ENCODE measurements at regions of chr5 and their contacts with region 1.

Region 1: GRCh38 chr5:142356716-142357473 is 32.1 kb upstream of the SPRY4 start:
- DNase-seq: peak; percentile 95
- H3K4me3 Mint-ChIP-seq: peak overlapping the region; percentile 82
- H3K27ac Mint-ChIP-seq: peak overlapping the region; percentile 86
- H3K4me1 Mint-ChIP-seq: peaks cover 6% of the 10 kb centered on the region
- H3K27me3 Mint-ChIP-seq: no peaks in the 10 kb centered on the region
- CTCF ChIP-seq: no peak

Region 2: DNA sequence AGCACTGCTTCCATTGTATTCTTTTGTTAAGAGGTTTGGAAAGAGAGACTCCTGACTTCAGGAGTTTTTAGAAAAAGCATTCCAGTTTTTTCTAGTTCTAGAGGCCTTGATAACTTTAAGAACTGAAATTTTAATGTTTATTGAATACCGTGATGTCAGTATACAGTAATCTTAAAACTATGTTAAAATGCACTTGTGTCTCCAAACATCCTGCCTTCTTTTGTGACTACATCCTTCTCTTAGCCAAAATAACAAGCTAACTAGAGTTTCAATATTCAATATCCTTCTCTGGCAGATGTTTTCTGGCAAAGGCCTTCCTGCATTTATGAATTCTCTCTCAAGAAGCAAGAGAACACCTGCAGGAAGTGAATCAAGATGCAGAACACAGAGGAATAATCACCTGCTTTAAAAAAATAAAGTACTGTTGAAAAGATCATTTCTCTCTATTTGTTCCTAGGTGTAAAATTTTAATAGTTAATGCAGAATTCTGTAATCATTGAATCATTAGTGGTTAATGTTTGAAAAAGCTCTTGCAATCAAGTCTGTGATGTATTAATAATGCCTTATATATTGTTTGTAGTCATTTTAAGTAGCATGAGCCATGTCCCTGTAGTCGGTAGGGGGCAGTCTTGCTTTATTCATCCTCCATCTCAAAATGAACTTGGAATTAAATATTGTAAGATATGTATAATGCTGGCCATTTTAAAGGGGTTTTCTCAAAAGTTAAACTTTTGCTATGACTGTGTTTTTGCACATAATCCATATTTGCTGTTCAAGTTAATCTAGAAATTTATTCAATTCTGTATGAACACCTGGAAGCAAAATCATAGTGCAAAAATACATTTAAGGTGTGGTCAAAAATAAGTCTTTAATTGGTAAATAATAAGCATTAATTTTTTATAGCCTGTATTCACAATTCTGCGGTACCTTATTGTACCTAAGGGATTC is 205.2 kb before region 1 on chr5:
- CTCF ChIA-PET with region 1: interaction called, 4 read pairs
- POLR2A ChIA-PET with region 1: interaction called, 4 read pairs
- intact Hi-C with region 1: loop called (anchors 1 kb)
- DNase-seq: peak; percentile 85
- H3K4me3 Mint-ChIP-seq: no peak overlapping the region
- H3K27ac Mint-ChIP-seq: no peak overlapping the region
- H3K4me1 Mint-ChIP-seq: no peaks in the 10 kb centered on the region
- H3K27me3 Mint-ChIP-seq: no peaks in the 10 kb centered on the region
- CTCF ChIP-seq: peak; percentile 89

Region 3: DNA sequence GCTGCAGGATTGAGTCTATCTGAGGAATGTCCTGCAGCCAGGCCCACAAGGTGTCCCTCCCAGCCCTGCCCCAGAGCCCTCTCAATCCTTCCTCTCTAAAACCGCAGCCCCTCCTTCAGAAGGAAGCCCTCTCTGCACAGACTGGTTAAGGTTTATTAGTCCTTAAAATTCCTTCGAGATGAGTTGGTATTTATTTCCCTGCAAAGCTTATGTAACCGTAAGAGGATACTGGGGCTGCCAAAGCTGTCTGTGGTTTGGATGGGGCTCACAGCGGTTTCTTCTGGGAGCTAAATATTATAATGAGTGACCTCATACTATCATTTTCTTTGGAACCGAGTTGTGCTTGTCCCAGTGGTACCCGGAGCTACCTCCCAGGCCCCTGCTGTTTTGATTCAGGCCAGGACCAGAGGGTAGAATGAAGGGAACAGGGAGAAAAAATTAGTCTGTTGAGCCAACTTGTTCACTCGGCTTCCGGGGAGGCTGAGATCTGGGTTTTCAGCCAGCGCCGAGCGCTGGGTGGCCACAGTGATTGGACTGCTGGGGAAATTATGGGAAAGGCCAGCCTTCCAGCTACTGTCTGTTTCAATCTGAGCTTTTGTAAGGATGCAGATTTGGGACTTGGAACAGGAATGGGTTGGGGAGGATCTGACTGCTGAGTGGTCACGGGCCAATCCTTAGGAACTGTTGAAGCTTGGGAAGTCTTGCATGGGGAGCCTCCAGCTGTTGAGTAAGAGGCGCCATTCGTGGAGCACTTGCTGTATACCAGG is 140.8 kb before region 1 on chr5:
- CTCF ChIA-PET with region 1: no interaction called
- POLR2A ChIA-PET with region 1: interaction called, 3 read pairs
- intact Hi-C with region 1: loop called (anchors 2 kb)
- DNase-seq: peak; percentile 99
- H3K4me3 Mint-ChIP-seq: peak overlapping the region; percentile 72
- H3K27ac Mint-ChIP-seq: peak overlapping the region; percentile 35
- H3K4me1 Mint-ChIP-seq: peaks cover 12% of the 10 kb centered on the region
- H3K27me3 Mint-ChIP-seq: peaks cover 2% of the 10 kb centered on the region
- CTCF ChIP-seq: no peak

Region 4: DNA sequence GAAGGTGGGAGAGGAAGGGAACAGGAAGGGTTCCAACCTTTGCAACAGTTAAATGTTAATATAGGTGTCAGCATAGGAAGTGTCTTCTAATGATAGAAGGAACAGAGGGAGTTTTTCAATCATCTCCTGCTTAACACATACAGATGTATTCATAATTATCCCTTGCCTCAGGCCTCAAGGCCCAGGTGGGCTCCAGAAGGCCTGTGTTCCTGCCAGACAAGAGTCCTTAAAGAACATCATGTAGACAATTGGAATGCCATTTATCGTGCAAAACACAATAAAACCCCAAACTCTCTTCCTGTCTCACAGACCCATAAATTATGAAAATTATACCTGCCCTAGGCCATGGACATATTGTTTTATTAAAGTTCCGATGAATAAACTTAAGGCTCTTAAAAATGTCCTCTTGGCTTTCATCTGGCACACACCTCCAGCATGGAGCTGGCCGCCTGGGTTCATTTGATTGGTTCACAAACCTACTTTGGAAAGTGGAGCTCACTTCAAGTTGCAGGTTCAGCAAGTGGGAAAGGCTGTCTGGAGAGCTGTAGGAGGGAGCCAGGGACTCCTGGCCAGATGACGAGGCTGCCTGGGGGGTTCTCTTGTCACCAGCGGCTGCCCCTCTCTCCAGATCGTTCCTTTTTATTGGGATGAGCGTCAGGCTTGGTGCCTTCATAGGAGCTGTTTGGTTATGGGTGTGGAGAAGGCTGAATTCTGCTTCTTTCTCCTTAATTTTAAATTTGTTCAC is 49.6 kb before region 1 on chr5:
- CTCF ChIA-PET with region 1: no interaction called
- POLR2A ChIA-PET with region 1: no interaction called
- intact Hi-C with region 1: no loop called
- DNase-seq: no peak
- H3K4me3 Mint-ChIP-seq: no peak overlapping the region
- H3K27ac Mint-ChIP-seq: no peak overlapping the region
- H3K4me1 Mint-ChIP-seq: no peaks in the 10 kb centered on the region
- H3K27me3 Mint-ChIP-seq: no peaks in the 10 kb centered on the region
- CTCF ChIP-seq: no peak

Region 5: GRCh38 chr5:142343531-142343930 is 13.4 kb before region 1 on chr5:
- CTCF ChIA-PET with region 1: interaction called, 4 read pairs
- POLR2A ChIA-PET with region 1: interaction called, 12 read pairs
- intact Hi-C with region 1: no loop called
- DNase-seq: no peak
- H3K4me3 Mint-ChIP-seq: no peak overlapping the region
- H3K27ac Mint-ChIP-seq: no peak overlapping the region
- H3K4me1 Mint-ChIP-seq: peaks cover 17% of the 10 kb centered on the region
- H3K27me3 Mint-ChIP-seq: no peaks in the 10 kb centered on the region
- CTCF ChIP-seq: no peak

Measured in MCF 10A (cell line).